Gastrocnemius medialis (tissue), 4 donors: ENCODE measurements at regions of chr9 and their contacts with region 1.

Region 1: DNA sequence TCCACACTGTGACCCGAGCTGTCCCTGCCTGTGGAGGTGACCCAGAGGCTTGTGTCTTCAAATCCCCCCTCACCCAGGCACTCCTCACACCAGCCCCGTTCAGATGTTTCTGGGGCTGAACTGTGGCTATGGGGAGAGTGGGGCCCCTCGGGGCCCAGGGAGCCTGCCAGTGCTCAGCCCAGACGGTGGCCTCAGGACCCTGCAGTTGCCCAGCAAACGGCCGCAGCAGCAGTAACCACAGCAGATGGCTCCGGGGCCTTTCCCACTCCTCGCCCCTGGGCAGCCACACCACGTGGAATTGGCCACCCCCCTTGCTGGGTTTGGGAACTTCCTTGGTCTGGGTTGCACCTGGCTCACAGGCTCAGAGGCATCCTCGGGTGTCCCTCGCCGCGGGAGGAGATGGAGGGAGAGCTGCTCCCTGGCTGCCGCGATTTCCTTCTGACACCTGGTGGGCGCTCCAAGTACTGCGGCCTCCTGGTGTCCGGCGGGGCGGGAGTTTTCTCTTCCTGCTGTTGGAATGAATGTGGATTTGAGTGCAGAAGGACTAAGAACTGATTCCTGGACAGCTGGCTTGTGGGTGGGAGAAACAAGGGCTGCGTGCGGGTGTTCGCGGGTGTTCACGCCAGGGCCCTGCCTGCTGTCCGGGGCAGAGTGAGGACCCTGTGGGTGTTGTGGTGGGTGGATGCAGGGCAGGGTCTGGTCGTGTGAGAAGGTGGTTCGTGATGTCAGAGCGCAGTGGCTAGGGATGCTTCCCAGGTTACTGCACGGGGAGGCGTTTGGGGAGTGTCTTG is 97.5 kb downstream of the COL5A1 start:
- DNase-seq: peak; percentile 33 to 48
- ATAC-seq: peak in 1 of 2 donors; percentile 21
- H3K4me3 ChIP-seq: no peak overlapping the region
- H3K27ac ChIP-seq: no peak overlapping the region
- H3K4me1 ChIP-seq: peaks cover 10 to 13% of the 10 kb centered on the region in 2 donors
- H3K27me3 ChIP-seq: peaks cover 4 to 9% (median 7%) of the 10 kb centered on the region in 3 donors
- CTCF ChIP-seq: peak; percentile 59 to 85 (median 83)
- POLR2A ChIP-seq: no peak

Region 2: GRCh38 chr9:134163353-134164196 is 575.5 kb before region 1 on chr9:
- in situ Hi-C with region 1: no loop called
- intact Hi-C with region 1: loop called (anchors 10 kb)
- DNase-seq: peak; percentile 45 to 60
- ATAC-seq: peak in 1 of 2 donors; percentile 31
- H3K4me3 ChIP-seq: no peak overlapping the region
- H3K27ac ChIP-seq: no peak overlapping the region
- H3K4me1 ChIP-seq: peaks cover 4 to 10% of the 10 kb centered on the region in 2 donors
- H3K27me3 ChIP-seq: no peaks in the 10 kb centered on the region
- CTCF ChIP-seq: peak; percentile 39 to 63 (median 60)
- POLR2A ChIP-seq: no peak

Region 3: GRCh38 chr9:134449221-134449894 is 289.7 kb before region 1 on chr9:
- in situ Hi-C with region 1: loop called in 1 of 4 experiments (anchors 25 kb)
- intact Hi-C with region 1: loop called (anchors 1 kb)
- DNase-seq: peak; percentile 83 to 87
- ATAC-seq: peak; percentile 84 to 85
- H3K4me3 ChIP-seq: no peak overlapping the region
- H3K27ac ChIP-seq: no peak overlapping the region
- H3K4me1 ChIP-seq: no peaks in the 10 kb centered on the region
- H3K27me3 ChIP-seq: no peaks in the 10 kb centered on the region
- CTCF ChIP-seq: peak; percentile 60 to 87 (median 84)
- POLR2A ChIP-seq: no peak

Region 4: GRCh38 chr9:134455934-134456739 is 282.9 kb before region 1 on chr9:
- in situ Hi-C with region 1: loop called in 1 of 4 experiments (anchors 25 kb)
- intact Hi-C with region 1: no loop called
- DNase-seq: peak; percentile 67 to 80
- ATAC-seq: peak; percentile 74
- H3K4me3 ChIP-seq: peak overlapping the region; percentile 38 to 65 (median 49)
- H3K27ac ChIP-seq: peak overlapping the region; percentile 77 to 84 (median 81)
- H3K4me1 ChIP-seq: peaks cover 15 to 23% of the 10 kb centered on the region in 2 donors
- H3K27me3 ChIP-seq: no peaks in the 10 kb centered on the region
- CTCF ChIP-seq: no peak
- POLR2A ChIP-seq: peak; percentile 38 to 58

Region 5: GRCh38 chr9:134656334-134657006 is 82.6 kb before region 1 on chr9:
- in situ Hi-C with region 1: no loop called
- intact Hi-C with region 1: no loop called
- DNase-seq: no peak
- ATAC-seq: no peak
- H3K4me3 ChIP-seq: no peak overlapping the region
- H3K27ac ChIP-seq: no peak overlapping the region
- H3K4me1 ChIP-seq: no peaks in the 10 kb centered on the region
- H3K27me3 ChIP-seq: peaks cover 0 to 12% (median 2%) of the 10 kb centered on the region in 3 donors
- CTCF ChIP-seq: no peak
- POLR2A ChIP-seq: no peak

Region 6: DNA sequence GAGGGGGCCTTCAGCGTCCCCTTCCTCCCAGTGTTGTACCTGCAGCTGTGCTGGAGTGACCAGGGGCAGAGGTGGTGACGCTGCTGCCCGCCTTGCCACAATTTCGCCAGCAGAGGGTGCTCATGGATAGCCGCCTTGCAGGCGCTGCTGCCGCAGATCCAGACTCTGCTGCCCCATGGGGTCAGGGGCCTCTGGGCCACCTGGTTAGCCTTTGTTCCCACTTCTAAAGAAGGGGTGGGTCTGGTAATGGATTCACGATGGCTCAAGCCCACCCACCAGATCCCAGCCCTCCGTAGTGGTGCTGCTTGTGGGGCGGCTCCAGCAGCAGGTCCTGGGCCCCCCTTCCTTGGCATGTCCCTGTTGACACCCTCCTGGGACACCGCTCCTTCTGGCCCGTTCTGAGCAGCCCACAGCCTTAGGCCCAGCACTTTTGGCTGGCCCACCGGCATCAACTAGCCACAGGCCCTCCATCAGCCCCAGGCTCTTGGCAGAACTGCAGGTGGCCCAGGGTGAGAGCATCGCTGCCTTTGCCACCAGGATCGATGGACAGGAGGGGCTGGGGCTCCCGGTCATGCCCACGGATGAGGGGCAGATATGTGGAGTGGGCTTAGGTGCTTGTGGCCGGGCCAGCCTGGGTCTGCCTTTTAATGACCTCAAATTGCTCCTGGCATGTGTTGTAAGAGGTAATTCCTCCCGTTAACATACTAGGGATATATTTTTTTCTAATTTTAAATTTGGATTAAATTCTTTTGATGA is 40.3 kb before region 1 on chr9:
- in situ Hi-C with region 1: loop called in 3 of 4 experiments (anchors 5 to 10 kb)
- intact Hi-C with region 1: loop called (anchors 1 kb)
- DNase-seq: peak in 1 of 2 donors; percentile 37
- ATAC-seq: no peak
- H3K4me3 ChIP-seq: no peak overlapping the region
- H3K27ac ChIP-seq: no peak overlapping the region
- H3K4me1 ChIP-seq: no peaks in the 10 kb centered on the region
- H3K27me3 ChIP-seq: peaks cover 0 to 7% (median 0%) of the 10 kb centered on the region in 3 donors
- CTCF ChIP-seq: peak; percentile 50 to 82 (median 76)
- POLR2A ChIP-seq: no peak

Region 7: GRCh38 chr9:134704498-134704897 is 34.6 kb before region 1 on chr9:
- in situ Hi-C with region 1: loop called in 3 of 4 experiments (anchors 5 to 10 kb)
- intact Hi-C with region 1: no loop called
- DNase-seq: no peak
- ATAC-seq: no peak
- H3K4me3 ChIP-seq: no peak overlapping the region
- H3K27ac ChIP-seq: no peak overlapping the region
- H3K4me1 ChIP-seq: peaks cover 0 to 19% of the 10 kb centered on the region in 2 donors
- H3K27me3 ChIP-seq: peaks cover 0 to 19% (median 2%) of the 10 kb centered on the region in 3 donors
- CTCF ChIP-seq: no peak
- POLR2A ChIP-seq: no peak

Region 8: DNA sequence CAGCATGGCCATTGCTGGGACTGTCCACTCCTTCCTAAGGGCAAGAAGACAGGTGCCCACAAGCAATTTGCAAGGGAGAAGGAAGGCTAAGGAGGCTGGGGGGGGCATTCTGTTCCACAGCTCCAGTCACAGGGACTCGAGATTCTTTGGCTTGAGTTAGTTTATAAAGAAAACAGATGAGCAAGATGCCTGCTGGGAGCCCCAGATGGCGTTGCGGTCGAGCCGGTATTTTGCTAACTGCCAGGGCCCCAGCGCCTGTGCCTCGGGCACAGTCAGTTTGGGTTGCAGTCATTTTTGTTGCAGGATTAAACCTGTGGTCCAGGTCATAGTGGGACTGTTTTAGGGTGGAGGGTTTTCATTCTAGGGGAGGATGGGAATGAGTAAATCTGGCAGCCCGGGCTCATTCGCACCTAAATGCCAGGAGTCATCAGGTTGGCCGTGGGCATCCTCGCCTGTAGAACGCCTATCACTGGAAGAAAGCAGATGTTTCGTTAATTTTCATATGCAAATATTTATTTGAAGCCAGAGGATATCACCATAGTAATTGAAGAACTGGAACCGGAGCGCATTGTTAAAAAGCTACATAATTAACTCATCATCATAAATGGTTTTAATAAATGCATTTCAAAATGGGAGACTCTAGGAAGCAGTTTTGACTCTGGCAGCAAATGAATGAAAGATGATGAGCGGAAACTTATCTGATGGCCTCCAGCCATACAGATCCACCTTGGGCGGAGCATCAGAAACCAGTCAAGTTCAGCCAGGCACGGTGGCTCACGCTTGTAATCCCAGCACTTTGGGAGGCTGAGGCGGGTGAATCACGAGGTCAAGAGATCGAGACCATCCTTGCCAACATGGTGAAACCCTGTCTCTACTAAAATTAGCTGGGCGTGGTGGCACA is 54.5 kb after region 1 on chr9:
- in situ Hi-C with region 1: no loop called
- intact Hi-C with region 1: no loop called
- DNase-seq: no peak
- ATAC-seq: no peak
- H3K4me3 ChIP-seq: no peak overlapping the region
- H3K27ac ChIP-seq: no peak overlapping the region
- H3K4me1 ChIP-seq: no peaks in the 10 kb centered on the region
- H3K27me3 ChIP-seq: no peaks in the 10 kb centered on the region
- CTCF ChIP-seq: no peak
- POLR2A ChIP-seq: no peak

Region 9: GRCh38 chr9:134895113-134895512 is 156.0 kb after region 1 on chr9:
- in situ Hi-C with region 1: no loop called
- intact Hi-C with region 1: no loop called
- DNase-seq: peak in 1 of 2 donors; percentile 35
- ATAC-seq: no peak
- H3K4me3 ChIP-seq: no peak overlapping the region
- H3K27ac ChIP-seq: peak overlapping the region; percentile 1 to 80 (median 66)
- H3K4me1 ChIP-seq: peaks cover 3 to 35% of the 10 kb centered on the region in 2 donors
- H3K27me3 ChIP-seq: no peaks in the 10 kb centered on the region
- CTCF ChIP-seq: no peak
- POLR2A ChIP-seq: no peak